ENCODE measurements at regions of chr14 and their contacts with region 1.

Region 1: GRCh38 chr14:54712465-54713200 is 145.7 kb downstream of the SAMD4A start:
- DNase-seq: peak in 2 of 3 donors; percentile 53 to 73
- H3K4me3 ChIP-seq: peak overlapping the region in 5 of 7 experiments; percentile 29 to 66 (median 40)
- H3K27ac ChIP-seq: peak overlapping the region in 1 of 2 experiments; percentile 52
- H3K4me1 ChIP-seq: peaks cover 14 to 20% (median 20%) of the 10 kb centered on the region in 4 experiments
- H3K27me3 ChIP-seq: no peaks in the 10 kb centered on the region

Region 2: DNA sequence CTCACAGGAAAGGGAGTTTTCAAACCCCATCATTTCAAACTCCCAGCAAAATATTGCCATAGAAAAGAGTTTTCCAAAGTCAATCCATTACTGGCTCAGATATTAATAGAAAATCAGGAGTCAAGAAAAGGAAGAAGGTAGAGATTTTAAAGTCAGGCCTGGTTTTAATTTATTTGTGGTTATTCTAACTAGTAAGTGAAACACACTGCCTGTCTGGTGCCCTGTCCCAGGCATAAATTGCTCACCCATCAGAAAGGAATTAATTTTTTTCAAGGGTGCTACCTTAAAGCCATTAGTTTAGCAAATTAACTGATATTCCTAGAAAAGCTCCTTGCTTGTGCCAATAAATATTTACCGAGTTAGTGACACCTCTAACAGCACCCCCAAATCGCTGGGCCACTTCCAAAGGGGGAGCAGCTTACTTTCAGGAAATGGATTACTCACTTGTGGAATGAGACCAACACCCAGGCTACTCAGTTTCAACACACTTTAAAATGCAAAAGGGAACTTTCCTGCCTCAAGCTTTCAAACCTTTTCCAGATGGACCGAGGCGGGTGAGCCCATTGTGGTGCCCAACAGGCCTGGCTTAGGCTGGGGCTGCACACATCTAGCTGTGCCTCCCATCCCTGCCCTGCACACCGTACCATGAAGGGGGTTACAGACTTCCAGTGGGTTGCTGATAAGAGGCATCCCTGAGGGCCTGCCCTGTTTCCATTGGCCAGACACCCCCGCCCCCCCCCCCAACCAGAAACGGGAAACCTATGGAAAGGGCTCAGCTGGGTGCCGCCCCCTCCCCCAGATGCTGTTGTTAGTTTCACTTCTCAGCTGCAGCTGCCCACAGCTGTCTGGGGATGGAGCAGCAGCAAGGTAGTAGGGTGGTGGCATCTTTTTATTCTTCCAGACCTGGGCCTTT is 28.5 kb before region 1 on chr14:
- CTCF ChIA-PET with region 1: interaction called, 13 read pairs
- POLR2A ChIA-PET with region 1: no interaction called
- DNase-seq: peak in 2 of 3 donors; percentile 20 to 35
- H3K4me3 ChIP-seq: no peak overlapping the region
- H3K27ac ChIP-seq: no peak overlapping the region
- H3K4me1 ChIP-seq: peaks cover 0 to 21% (median 8%) of the 10 kb centered on the region in 4 experiments
- H3K27me3 ChIP-seq: no peaks in the 10 kb centered on the region

Region 3: GRCh38 chr14:54742492-54743350 is 30.1 kb after region 1 on chr14:
- CTCF ChIA-PET with region 1: no interaction called
- POLR2A ChIA-PET with region 1: no interaction called
- DNase-seq: no peak
- H3K4me3 ChIP-seq: no peak overlapping the region
- H3K27ac ChIP-seq: no peak overlapping the region
- H3K4me1 ChIP-seq: peaks cover under 1 to 19% (median 6%) of the 10 kb centered on the region in 4 experiments
- H3K27me3 ChIP-seq: no peaks in the 10 kb centered on the region

Region 4: GRCh38 chr14:54881235-54881760 is 168.7 kb after region 1 on chr14:
- CTCF ChIA-PET with region 1: no interaction called
- POLR2A ChIA-PET with region 1: no interaction called
- DNase-seq: peak in 2 of 3 donors; percentile 62 to 71
- H3K4me3 ChIP-seq: peak overlapping the region in 6 of 7 experiments; percentile 20 to 93 (median 61)
- H3K27ac ChIP-seq: peak overlapping the region; percentile 53 to 81
- H3K4me1 ChIP-seq: peaks cover 0 to 41% (median 12%) of the 10 kb centered on the region in 4 experiments
- H3K27me3 ChIP-seq: no peaks in the 10 kb centered on the region

Measured in common myeloid progenitor, CD34-positive (primary cell).